CD14-positive monocyte (primary cell): ENCODE measurements at regions of chr12 and their contacts with region 1.

Region 1: GRCh38 chr12:6662906-6663742 is at the start of gene ING4:
- DNase-seq: peak; percentile 99 to 100 (median 100)
- H3K4me3 ChIP-seq: peak within 1 kb of the TSS; percentile 80 to 97 (median 88)
- H3K4me3 Mint-ChIP-seq: peak within 1 kb of the TSS; percentile 88 to 100
- H3K27ac ChIP-seq: peak within 1 kb of the TSS; percentile 34 to 93
- H3K27ac Mint-ChIP-seq: peak within 1 kb of the TSS; percentile 89 to 100 (median 98)
- H3K4me1 ChIP-seq: peaks cover 17 to 37% of the 10 kb centered on the region in 2 donors
- H3K4me1 Mint-ChIP-seq: peaks cover 34% of the 10 kb centered on the region
- H3K27me3 ChIP-seq: no peaks in the 10 kb centered on the region
- H3K27me3 Mint-ChIP-seq: peaks cover 0 to 1% (median 0%) of the 10 kb centered on the region in 3 donors
- CTCF ChIP-seq: no peak
- polyA plus RNA-seq, gene ING4: 62.2 to 67.1 (median 64.0) TPM

Region 2: DNA sequence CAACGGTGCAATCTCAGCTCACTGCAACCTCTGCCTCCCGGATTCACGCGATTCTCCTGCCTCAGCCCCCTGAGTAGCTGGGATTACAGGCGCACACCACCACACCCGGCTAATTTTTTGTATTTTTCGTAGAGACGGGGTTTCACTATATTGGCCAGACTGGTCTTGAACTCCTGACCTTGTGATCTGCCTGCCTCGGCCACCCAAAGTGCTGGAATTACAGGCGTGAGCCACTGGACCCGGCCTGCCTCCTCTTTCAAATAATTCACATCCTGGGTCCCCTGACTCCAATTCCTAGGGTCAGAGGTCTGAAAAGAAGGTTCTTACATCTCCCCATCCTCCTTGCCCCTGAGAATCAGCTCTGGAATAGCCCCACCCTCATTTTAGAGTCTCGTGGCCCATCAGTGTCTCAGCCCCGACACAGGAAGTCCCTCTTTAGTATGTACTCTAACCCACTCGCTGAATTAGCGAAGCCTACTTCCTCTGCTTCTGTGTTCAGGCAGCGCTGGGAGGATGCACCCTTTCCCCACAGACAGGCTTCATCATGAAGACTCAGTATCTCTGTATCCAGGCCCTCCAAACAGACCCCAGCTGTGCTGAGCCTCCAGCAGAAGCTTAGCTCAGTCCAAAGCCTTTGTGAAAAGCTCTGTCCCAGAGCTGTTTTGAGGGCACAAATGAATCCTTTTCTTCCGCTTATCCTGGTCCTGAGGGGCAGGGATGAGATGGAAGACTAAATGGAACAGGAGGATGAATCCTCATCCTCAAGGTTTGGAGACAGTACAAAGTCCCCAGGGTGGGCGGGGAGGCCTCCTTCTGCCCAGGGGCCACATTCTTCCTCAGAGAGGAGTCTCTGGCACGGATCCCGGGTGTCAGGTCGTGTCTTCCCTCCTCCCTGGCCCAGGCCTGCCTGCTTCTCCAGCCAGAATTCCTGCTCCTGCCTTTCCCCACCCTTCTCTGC is 30.8 kb before region 1 on chr12:
- intact Hi-C with region 1: no loop called
- DNase-seq: peak in 1 of 3 donors; percentile 27
- H3K4me3 ChIP-seq: no peak overlapping the region
- H3K4me3 Mint-ChIP-seq: peak overlapping the region; percentile 46 to 47
- H3K27ac ChIP-seq: no peak overlapping the region
- H3K27ac Mint-ChIP-seq: peak overlapping the region in 5 of 7 donors; percentile 19 to 76 (median 44)
- H3K4me1 ChIP-seq: peaks cover 26 to 29% of the 10 kb centered on the region in 2 donors
- H3K4me1 Mint-ChIP-seq: peaks cover 30% of the 10 kb centered on the region
- H3K27me3 ChIP-seq: no peaks in the 10 kb centered on the region
- H3K27me3 Mint-ChIP-seq: peaks cover 0 to 8% (median 5%) of the 10 kb centered on the region in 3 donors
- CTCF ChIP-seq: no peak

Region 3: GRCh38 chr12:6723607-6724396 is 60.7 kb after region 1 on chr12 and contains the start of gene COPS7A:
- intact Hi-C with region 1: loop called (anchors 2 to 10 kb)
- DNase-seq: peak; percentile 91 to 96 (median 94)
- H3K4me3 ChIP-seq: peak within 1 kb of the TSS; percentile 52 to 85 (median 81)
- H3K4me3 Mint-ChIP-seq: peak within 1 kb of the TSS; percentile 93 to 99
- H3K27ac ChIP-seq: peak within 1 kb of the TSS; percentile 97 to 98
- H3K27ac Mint-ChIP-seq: peak within 1 kb of the TSS; percentile 93 to 99 (median 98)
- H3K4me1 ChIP-seq: peaks cover 14 to 17% of the 10 kb centered on the region in 2 donors
- H3K4me1 Mint-ChIP-seq: peaks cover 18% of the 10 kb centered on the region
- H3K27me3 ChIP-seq: no peaks in the 10 kb centered on the region
- H3K27me3 Mint-ChIP-seq: peaks cover 0 to 3% (median 1%) of the 10 kb centered on the region in 3 donors
- CTCF ChIP-seq: no peak
- polyA plus RNA-seq, gene COPS7A: 70.1 to 77.1 (median 72.3) TPM

Region 4: DNA sequence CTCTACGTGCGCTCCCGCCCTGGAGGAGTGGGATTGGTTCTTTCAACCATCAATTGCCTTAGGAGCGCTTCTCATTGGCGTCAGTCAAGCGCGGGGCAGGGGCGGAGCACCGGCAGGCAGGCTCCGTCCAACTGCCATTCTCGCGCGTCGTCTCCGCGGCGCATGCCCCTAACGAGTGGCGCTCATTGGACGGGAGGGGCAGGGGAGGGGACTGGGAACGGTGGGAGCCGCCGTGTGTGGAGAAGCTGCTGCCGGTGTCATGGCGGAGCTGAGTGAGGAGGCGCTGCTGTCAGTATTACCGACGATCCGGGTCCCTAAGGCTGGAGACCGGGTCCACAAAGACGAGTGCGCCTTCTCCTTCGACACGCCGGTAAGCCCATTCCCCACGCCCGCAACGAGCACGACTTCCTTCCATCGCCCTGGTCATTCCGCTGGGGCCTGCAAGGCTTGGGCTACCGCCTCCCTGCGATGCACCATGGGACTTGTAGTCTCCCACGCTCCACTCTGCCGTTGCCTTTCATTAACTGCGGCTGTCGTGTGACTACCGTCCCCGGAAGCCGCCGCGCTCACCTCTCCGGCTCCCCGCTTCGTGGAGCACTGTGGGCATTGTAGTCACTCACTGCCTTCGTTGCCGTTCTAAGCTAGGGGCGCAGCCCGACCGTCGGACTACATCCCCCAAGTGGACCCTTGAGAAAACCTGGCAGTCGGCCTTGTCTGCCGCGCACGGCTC is 189.0 kb after region 1 on chr12 and contains the start of gene USP5:
- intact Hi-C with region 1: loop called in 1 of 2 experiments (anchors 2 kb)
- DNase-seq: peak; percentile 98 to 100 (median 99)
- H3K4me3 ChIP-seq: peak within 1 kb of the TSS; percentile 56 to 93 (median 71)
- H3K4me3 Mint-ChIP-seq: peak within 1 kb of the TSS; percentile 98
- H3K27ac ChIP-seq: peak within 1 kb of the TSS; percentile 73 to 85
- H3K27ac Mint-ChIP-seq: peak within 1 kb of the TSS; percentile 95 to 99 (median 99)
- H3K4me1 ChIP-seq: peaks cover 29 to 35% of the 10 kb centered on the region in 2 donors
- H3K4me1 Mint-ChIP-seq: peaks cover 28% of the 10 kb centered on the region
- H3K27me3 ChIP-seq: no peaks in the 10 kb centered on the region
- H3K27me3 Mint-ChIP-seq: no peaks in the 10 kb centered on the region
- CTCF ChIP-seq: no peak
- polyA plus RNA-seq, gene USP5: 28.0 to 32.4 (median 29.9) TPM